CD14-positive monocyte (primary cell): ENCODE measurements at regions of chr16 and their contacts with region 1.

Region 1: GRCh38 chr16:23739516-23739915 is 15.3 kb upstream of the CHP2 start:
- DNase-seq: no peak
- H3K4me3 ChIP-seq: no peak overlapping the region
- H3K4me3 Mint-ChIP-seq: no peak overlapping the region
- H3K27ac ChIP-seq: no peak overlapping the region
- H3K27ac Mint-ChIP-seq: no peak overlapping the region
- H3K4me1 ChIP-seq: no peaks in the 10 kb centered on the region
- H3K4me1 Mint-ChIP-seq: peaks cover 3% of the 10 kb centered on the region
- H3K27me3 ChIP-seq: peaks cover 0 to 3% of the 10 kb centered on the region in 2 donors
- H3K27me3 Mint-ChIP-seq: peaks cover 5 to 23% (median 23%) of the 10 kb centered on the region in 3 donors
- CTCF ChIP-seq: no peak

Region 2: GRCh38 chr16:23534868-23535860 is 204.4 kb before region 1 on chr16:
- intact Hi-C with region 1: no loop called
- DNase-seq: no peak
- H3K4me3 ChIP-seq: no peak overlapping the region
- H3K4me3 Mint-ChIP-seq: no peak overlapping the region
- H3K27ac ChIP-seq: no peak overlapping the region
- H3K27ac Mint-ChIP-seq: no peak overlapping the region
- H3K4me1 ChIP-seq: peaks cover 11 to 15% of the 10 kb centered on the region in 2 donors
- H3K4me1 Mint-ChIP-seq: peaks cover 18% of the 10 kb centered on the region
- H3K27me3 ChIP-seq: no peaks in the 10 kb centered on the region
- H3K27me3 Mint-ChIP-seq: no peaks in the 10 kb centered on the region
- CTCF ChIP-seq: no peak

Region 3: DNA sequence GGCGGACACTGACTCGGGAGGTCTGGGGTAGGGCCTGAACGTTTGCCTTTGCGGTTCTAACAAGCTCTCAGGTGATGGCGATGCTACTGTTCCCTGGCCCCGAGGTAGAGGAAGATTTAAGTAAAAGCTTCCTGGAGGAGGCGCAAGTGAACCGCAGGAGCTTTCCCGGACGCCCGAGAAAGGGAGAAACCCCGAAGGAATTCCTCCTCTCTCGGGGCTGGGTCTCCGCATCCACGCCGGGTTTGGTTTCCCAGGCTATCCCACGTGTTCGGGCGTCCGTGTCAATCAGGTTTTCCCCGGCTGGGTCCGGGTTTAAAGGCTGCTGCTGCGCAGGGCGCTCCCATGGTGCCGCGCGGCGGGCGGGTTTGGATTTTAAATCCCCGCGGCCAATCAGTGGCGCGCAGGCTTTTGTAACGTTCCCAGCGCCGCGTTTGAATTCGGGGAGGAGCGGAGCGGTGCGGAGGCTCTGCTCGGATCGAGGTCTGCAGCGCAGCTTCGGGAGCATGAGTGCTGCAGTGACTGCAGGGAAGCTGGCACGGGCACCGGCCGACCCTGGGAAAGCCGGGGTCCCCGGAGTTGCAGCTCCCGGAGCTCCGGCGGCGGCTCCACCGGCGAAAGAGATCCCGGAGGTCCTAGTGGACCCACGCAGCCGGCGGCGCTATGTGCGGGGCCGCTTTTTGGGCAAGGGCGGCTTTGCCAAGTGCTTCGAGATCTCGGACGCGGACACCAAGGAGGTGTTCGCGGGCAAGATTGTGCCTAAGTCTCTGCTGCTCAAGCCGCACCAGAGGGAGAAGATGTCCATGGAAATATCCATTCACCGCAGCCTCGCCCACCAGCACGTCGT is 60.9 kb before region 1 on chr16 and contains the start of gene PLK1:
- intact Hi-C with region 1: no loop called
- DNase-seq: peak; percentile 47 to 59 (median 57)
- H3K4me3 ChIP-seq: peak within 1 kb of the TSS; percentile 48 to 85 (median 72)
- H3K4me3 Mint-ChIP-seq: peak within 1 kb of the TSS; percentile 80 to 90
- H3K27ac ChIP-seq: peak within 1 kb of the TSS; percentile 3 to 68
- H3K27ac Mint-ChIP-seq: peak within 1 kb of the TSS; percentile 56 to 87 (median 76)
- H3K4me1 ChIP-seq: peaks cover 38 to 44% of the 10 kb centered on the region in 2 donors
- H3K4me1 Mint-ChIP-seq: peaks cover 43% of the 10 kb centered on the region
- H3K27me3 ChIP-seq: no peaks in the 10 kb centered on the region
- H3K27me3 Mint-ChIP-seq: peaks cover 0 to 2% (median 0%) of the 10 kb centered on the region in 3 donors
- CTCF ChIP-seq: peak; percentile 34
- polyA plus RNA-seq, gene PLK1: 3.5 TPM in 1 of 3 donors, not detected in the others

Region 4: DNA sequence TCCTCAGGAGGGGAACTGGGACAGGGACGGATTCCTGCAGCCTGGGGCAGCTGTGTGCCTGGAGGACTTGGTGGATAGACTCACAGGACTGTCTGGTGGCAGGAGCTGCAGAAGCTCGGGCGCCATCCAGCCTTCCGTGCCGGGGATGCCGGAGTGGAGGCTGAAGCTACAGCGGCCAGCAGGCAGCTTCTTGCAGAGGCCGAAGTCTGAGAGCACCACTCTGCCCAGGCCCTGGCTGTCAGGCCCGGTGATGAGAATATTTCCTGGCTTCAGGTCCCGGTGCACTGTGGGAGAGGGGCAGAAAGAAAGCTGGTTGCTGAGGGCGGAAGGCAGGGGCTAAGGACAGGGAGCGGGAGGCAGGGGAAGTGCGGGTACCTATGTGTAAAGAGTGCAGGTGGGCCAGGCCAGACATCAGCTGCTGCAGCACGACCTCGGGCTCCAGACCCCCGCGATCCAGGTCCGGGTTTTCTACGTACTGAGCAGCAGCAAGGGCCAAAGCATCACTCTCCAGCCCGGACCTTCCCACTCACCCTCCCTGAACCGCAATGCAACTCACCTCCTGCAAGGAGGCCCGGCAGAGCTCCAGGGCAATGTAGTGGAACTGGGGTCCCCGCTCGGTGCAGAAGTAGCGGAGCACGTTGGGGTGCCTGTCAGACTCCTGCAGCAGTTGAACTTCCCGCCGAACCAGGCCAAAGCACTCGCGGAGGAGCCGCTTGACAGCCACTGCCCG is 44.7 kb before region 1 on chr16:
- intact Hi-C with region 1: no loop called
- DNase-seq: no peak
- H3K4me3 ChIP-seq: peak overlapping the region in 1 of 3 experiments; percentile 51
- H3K4me3 Mint-ChIP-seq: peak overlapping the region; percentile 48 to 84
- H3K27ac ChIP-seq: no peak overlapping the region
- H3K27ac Mint-ChIP-seq: no peak overlapping the region
- H3K4me1 ChIP-seq: peaks cover 5 to 8% of the 10 kb centered on the region in 2 donors
- H3K4me1 Mint-ChIP-seq: peaks cover 12% of the 10 kb centered on the region
- H3K27me3 ChIP-seq: no peaks in the 10 kb centered on the region
- H3K27me3 Mint-ChIP-seq: peaks cover 3 to 10% (median 6%) of the 10 kb centered on the region in 3 donors
- CTCF ChIP-seq: no peak

Region 5: GRCh38 chr16:24036614-24037013 is 297.1 kb after region 1 on chr16:
- intact Hi-C with region 1: loop called (anchors 5 to 10 kb)
- DNase-seq: peak; percentile 13 to 29 (median 24)
- H3K4me3 ChIP-seq: no peak overlapping the region
- H3K4me3 Mint-ChIP-seq: no peak overlapping the region
- H3K27ac ChIP-seq: no peak overlapping the region
- H3K27ac Mint-ChIP-seq: peak overlapping the region in 2 of 7 donors; percentile 13 to 22
- H3K4me1 ChIP-seq: peaks cover 15 to 22% of the 10 kb centered on the region in 2 donors
- H3K4me1 Mint-ChIP-seq: peaks cover 30% of the 10 kb centered on the region
- H3K27me3 ChIP-seq: no peaks in the 10 kb centered on the region
- H3K27me3 Mint-ChIP-seq: peaks cover 0 to 2% (median 1%) of the 10 kb centered on the region in 3 donors
- CTCF ChIP-seq: peak; percentile 79